ENCODE measurements at regions of chr19 and their contacts with region 1.

Region 1: DNA sequence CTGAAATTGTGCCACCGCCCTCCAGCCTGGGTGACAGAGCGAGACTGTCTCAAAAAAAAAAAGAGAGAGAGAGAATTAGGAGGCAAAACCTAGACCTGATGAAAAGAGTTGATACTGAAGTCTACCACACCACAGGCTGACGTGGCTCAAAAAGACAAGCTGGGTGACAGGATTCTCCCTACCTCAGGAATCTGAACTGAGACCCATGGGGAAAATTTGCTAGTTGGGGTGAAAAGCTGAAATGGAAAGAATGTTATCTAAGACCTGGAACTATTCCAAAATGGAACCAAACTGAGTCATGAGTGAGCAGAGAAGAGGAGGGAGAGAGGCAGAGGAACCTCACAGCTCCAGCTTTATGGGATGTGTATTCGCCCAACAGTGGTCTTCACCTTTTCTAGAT is 11.7 kb downstream of the SMG9 start:
- DNase-seq: no peak
- H3K4me3 Mint-ChIP-seq: no peak overlapping the region
- H3K27ac Mint-ChIP-seq: no peak overlapping the region
- H3K4me1 Mint-ChIP-seq: peaks cover 40% of the 10 kb centered on the region
- H3K27me3 Mint-ChIP-seq: no peaks in the 10 kb centered on the region

Region 2: GRCh38 chr19:43754503-43755255 is 11.7 kb after region 1 on chr19 and contains the start of gene SMG9:
- CTCF ChIA-PET with region 1: interaction called, 6 read pairs
- POLR2A ChIA-PET with region 1: interaction called, 16 read pairs
- DNase-seq: peak; percentile 98
- H3K4me3 Mint-ChIP-seq: peak within 1 kb of the TSS; percentile 97
- H3K27ac Mint-ChIP-seq: peak within 1 kb of the TSS; percentile 99
- H3K4me1 Mint-ChIP-seq: peaks cover 67% of the 10 kb centered on the region
- H3K27me3 Mint-ChIP-seq: no peaks in the 10 kb centered on the region
- total RNA-seq, gene SMG9: 58.1 to 64.6 TPM

Region 3: GRCh38 chr19:43765109-43765876 is 22.3 kb after region 1 on chr19:
- CTCF ChIA-PET with region 1: interaction called, 18 read pairs
- POLR2A ChIA-PET with region 1: interaction called, 6 read pairs
- DNase-seq: peak; percentile 91
- H3K4me3 Mint-ChIP-seq: peak overlapping the region; percentile 56
- H3K27ac Mint-ChIP-seq: peak overlapping the region; percentile 96
- H3K4me1 Mint-ChIP-seq: peaks cover 69% of the 10 kb centered on the region
- H3K27me3 Mint-ChIP-seq: no peaks in the 10 kb centered on the region

Region 4: DNA sequence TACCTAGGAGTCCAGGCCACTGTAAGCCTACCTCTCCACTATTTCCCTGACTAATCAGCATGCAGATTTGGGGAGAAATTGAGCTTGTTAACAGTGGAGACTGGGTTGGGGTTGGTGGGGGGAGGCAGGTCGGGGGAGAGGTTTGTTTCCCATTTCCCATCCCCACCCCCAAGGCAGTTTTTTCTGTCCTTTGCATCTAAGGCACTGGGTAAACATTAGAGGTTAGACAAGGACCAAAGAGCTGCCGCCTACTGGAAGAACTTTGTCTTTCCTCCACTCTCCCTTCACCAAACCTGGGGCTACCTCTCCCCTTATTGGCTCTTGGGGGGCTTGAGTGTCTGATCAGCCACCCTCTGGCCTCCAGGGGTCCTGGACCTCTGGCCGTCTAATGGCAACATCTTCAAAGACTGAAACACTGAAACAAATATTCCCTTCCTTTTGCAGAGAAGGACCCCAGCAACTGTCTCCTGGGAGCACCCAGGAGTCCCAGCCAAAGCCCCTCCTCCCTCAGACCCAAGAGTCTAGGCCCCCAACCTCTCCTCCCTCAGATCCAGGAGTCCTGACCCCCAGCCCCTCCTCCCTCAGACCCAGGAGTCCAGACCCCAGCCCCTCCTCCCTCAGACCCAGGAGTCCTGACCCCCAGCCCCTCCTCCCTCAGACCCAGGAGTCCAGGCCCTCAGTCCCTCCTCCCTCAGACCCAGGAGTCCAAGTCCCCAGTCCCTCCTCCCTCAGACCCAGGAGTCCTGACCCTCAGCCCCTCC is 37.0 kb after region 1 on chr19:
- CTCF ChIA-PET with region 1: interaction called, 35 read pairs
- POLR2A ChIA-PET with region 1: interaction called, 16 read pairs
- DNase-seq: no peak
- H3K4me3 Mint-ChIP-seq: peak overlapping the region; percentile 72
- H3K27ac Mint-ChIP-seq: peak overlapping the region; percentile 92
- H3K4me1 Mint-ChIP-seq: peaks cover 86% of the 10 kb centered on the region
- H3K27me3 Mint-ChIP-seq: no peaks in the 10 kb centered on the region

Region 5: GRCh38 chr19:43784981-43785808 is 42.2 kb after region 1 on chr19:
- CTCF ChIA-PET with region 1: interaction called, 35 read pairs
- POLR2A ChIA-PET with region 1: interaction called, 16 read pairs
- DNase-seq: peak; percentile 65
- H3K4me3 Mint-ChIP-seq: peak overlapping the region; percentile 18
- H3K27ac Mint-ChIP-seq: peak overlapping the region; percentile 89
- H3K4me1 Mint-ChIP-seq: peaks cover 46% of the 10 kb centered on the region
- H3K27me3 Mint-ChIP-seq: peaks cover 5% of the 10 kb centered on the region

Region 6: DNA sequence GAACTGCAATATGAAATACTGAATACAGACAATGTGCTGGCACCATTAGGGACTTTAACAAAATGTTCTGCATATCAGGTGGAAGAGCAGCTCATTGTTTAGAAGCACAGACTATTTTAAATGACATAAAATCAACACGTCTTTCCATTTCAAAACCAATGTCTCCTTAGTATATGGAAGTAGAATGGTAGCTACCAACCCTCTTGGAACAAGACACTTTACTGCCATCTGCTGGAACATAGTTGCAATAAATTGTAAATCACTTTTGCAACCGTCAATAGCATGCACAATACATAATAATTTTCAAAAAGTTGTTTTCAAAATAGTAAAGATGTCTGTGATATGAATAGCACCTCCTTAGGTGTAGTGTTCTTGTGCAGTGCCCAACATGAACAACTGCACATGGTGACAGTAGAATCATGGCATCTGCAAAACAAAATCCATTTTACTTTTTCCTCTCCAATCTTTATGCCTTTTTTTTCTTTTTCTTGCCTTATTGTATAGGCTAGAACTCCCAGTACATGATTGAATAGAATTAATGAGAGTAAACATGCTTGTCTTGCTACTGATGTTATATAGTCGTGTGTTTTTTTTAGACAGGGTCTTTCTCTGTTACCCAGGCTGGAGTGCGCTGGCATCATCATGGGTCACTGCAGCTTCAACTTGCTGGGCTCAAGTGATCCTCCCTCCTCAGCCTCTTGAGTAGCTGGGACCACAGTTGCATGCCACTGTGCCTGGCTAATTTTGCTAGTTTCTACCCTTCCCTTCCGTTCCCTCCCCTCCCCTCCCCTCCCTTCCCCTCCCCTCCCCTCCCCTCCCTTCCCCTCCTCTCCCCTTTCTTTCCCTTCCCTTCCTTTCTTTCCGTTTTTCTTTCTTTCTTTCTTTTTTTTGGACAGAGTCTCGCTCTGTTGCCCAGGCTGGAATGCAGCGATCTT is 67.0 kb after region 1 on chr19:
- CTCF ChIA-PET with region 1: interaction called, 31 read pairs
- POLR2A ChIA-PET with region 1: interaction called, 3 read pairs
- DNase-seq: no peak
- H3K4me3 Mint-ChIP-seq: no peak overlapping the region
- H3K27ac Mint-ChIP-seq: no peak overlapping the region
- H3K4me1 Mint-ChIP-seq: peaks cover 10% of the 10 kb centered on the region
- H3K27me3 Mint-ChIP-seq: peaks cover 8% of the 10 kb centered on the region

Region 7: GRCh38 chr19:43913383-43913782 is 170.4 kb after region 1 on chr19:
- CTCF ChIA-PET with region 1: no interaction called
- POLR2A ChIA-PET with region 1: no interaction called
- DNase-seq: no peak
- H3K4me3 Mint-ChIP-seq: no peak overlapping the region
- H3K27ac Mint-ChIP-seq: no peak overlapping the region
- H3K4me1 Mint-ChIP-seq: no peaks in the 10 kb centered on the region
- H3K27me3 Mint-ChIP-seq: no peaks in the 10 kb centered on the region

Measured in activated CD4-positive, alpha-beta memory T cell treated with anti-CD3 and anti-CD28 coated beads, Interleukin-2, amount 10 ng/mL, durations not matched to agents 7 days and 5 days (primary cell).